Dorsolateral prefrontal cortex (tissue), 120 donors: ENCODE measurements at regions of chr1 and their contacts with region 1.

Region 1: GRCh38 chr1:26161415-26162219 is 2.7 kb downstream of the FAM110D start:
- DNase-seq: peak in 7 of 10 donors; percentile 23 to 79 (median 60)
- H3K4me3 ChIP-seq: peak overlapping the region; percentile 43 to 88 (median 69)
- H3K27ac ChIP-seq: peak overlapping the region in 38 of 59 donors; percentile 2 to 80 (median 54)
- H3K27me3 ChIP-seq: peaks cover 0 to 7% (median 0%) of the 10 kb centered on the region in 45 donors
- CTCF ChIP-seq: peak in 29 of 56 donors; percentile 7 to 65 (median 34)

Region 2: GRCh38 chr1:26111530-26112406 is 49.8 kb before region 1 on chr1 and contains the start of gene PDIK1L:
- intact Hi-C with region 1: loop called in 1 of 2 experiments (anchors 5 kb)
- DNase-seq: peak; percentile 78 to 94 (median 88)
- H3K4me3 ChIP-seq: peak within 1 kb of the TSS; percentile 68 to 100 (median 98)
- H3K27ac ChIP-seq: peak within 1 kb of the TSS; percentile 89 to 99 (median 97)
- H3K27me3 ChIP-seq: no peaks in the 10 kb centered on the region
- CTCF ChIP-seq: peak in 20 of 56 donors; percentile 8 to 51 (median 30)
- total RNA-seq, gene PDIK1L: 6.9 to 24.8 (median 16.2) TPM